Mammary epithelial cell (primary cell): ENCODE measurements at regions of chr12 and their contacts with region 1.

Region 1: DNA sequence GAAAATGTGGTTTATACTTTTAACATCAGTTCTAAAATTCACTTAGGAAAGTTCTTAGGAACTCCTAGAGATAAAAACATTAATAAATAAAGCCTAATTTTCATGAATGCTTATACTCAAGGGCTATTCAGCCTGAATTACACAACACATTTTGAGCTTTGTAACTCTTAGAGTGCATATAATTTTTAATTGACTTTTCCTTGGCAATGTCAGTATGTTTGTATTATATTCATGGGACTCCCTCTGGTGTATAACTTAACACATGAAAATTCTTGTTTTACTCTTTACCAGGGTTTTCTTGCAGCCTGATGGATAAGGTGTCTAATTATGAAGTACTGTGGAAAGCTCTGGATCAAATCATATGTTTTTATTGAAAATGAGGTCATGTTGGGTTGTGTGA is 150.6 kb upstream of the HMGA2 start:
- DNase-seq: no peak
- H3K4me3 ChIP-seq: no peak overlapping the region
- H3K27ac ChIP-seq: peak overlapping the region; percentile 98
- H3K4me1 ChIP-seq: peaks cover 55% of the 10 kb centered on the region
- H3K27me3 ChIP-seq: no peaks in the 10 kb centered on the region
- CTCF ChIP-seq: peak in 1 of 2 donors; percentile 46

Region 2: GRCh38 chr12:65313719-65314317 is 359.9 kb before region 1 on chr12:
- CTCF ChIA-PET with region 1: interaction called, 3 read pairs
- dilution Hi-C with region 1: no loop called
- in situ Hi-C with region 1: loop called (anchors 5 to 25 kb)
- intact Hi-C with region 1: loop called (anchors 1 kb)
- DNase-seq: peak; percentile 19
- H3K4me3 ChIP-seq: no peak overlapping the region
- H3K27ac ChIP-seq: peak overlapping the region; percentile 2
- H3K4me1 ChIP-seq: peaks cover 3% of the 10 kb centered on the region
- H3K27me3 ChIP-seq: no peaks in the 10 kb centered on the region
- CTCF ChIP-seq: peak; percentile 59 to 67

Region 3: DNA sequence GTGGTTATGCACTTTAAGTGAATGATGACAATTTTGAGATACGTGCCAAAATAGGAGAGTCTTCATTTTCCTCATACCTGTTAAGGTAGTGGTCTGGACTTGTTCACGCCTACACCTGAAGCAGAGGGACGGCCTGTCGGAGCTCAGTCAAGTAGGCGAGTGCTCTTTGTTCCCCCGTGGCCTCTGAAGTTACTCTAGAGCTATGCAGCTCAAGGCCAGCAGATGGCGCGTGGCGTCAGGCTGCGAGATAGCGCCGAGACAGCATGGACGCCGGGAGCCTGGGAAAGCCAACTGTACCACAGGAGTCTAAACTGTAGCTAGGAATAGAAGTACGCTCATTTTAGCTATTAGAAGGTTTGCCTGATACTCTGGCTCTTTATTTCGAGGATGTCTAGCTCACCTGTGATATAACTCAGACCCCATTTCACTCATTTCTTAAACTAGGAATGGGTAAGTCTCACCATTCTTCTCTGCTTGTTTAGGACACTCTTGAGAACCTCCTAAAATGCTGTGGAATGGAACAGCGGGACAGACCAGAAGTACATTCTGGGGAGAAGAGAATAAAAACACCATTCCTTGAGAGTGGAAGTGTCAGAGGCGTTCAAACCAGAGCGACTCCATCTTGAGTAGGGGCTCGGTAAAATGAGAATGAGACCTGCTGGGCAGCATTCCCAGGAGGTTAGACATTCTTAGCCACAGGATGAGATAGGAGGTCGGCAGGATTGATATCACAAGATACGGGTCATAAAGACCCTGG is 116.9 kb before region 1 on chr12:
- CTCF ChIA-PET with region 1: interaction called, 7 read pairs
- dilution Hi-C with region 1: loop called (anchors 5 kb)
- in situ Hi-C with region 1: no loop called
- intact Hi-C with region 1: loop called (anchors 1 kb)
- DNase-seq: peak; percentile 94
- H3K4me3 ChIP-seq: no peak overlapping the region
- H3K27ac ChIP-seq: peak overlapping the region; percentile 77
- H3K4me1 ChIP-seq: peaks cover 26% of the 10 kb centered on the region
- H3K27me3 ChIP-seq: no peaks in the 10 kb centered on the region
- CTCF ChIP-seq: peak; percentile 94 to 98

Region 4: GRCh38 chr12:65631621-65632111 is 42.1 kb before region 1 on chr12:
- CTCF ChIA-PET with region 1: no interaction called
- dilution Hi-C with region 1: no loop called
- in situ Hi-C with region 1: no loop called
- intact Hi-C with region 1: loop called (anchors 1 kb)
- DNase-seq: peak; percentile 100
- H3K4me3 ChIP-seq: no peak overlapping the region
- H3K27ac ChIP-seq: peak overlapping the region; percentile 100
- H3K4me1 ChIP-seq: peaks cover 54% of the 10 kb centered on the region
- H3K27me3 ChIP-seq: no peaks in the 10 kb centered on the region
- CTCF ChIP-seq: no peak

Region 5: DNA sequence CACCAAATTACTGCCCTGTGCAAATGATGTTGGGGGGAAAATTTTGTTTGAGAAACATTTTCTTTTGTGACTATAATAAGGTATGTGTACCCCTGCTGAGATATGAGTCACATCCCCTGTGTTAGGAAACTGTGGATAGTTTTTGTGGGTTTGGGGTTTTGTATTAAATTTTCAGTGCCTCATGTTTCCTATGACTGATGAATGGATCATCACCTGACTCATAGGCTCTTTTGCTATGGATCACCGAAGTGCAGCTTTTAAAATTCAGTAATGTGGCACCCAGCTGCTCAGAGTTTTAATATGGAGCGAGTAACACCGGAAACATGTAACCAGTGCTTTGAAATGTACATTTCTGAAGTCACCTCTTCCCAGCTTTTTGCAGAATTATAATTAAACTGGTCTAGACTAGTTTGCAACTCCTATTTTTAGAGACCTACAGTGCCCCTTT is 16.8 kb before region 1 on chr12:
- CTCF ChIA-PET with region 1: no interaction called
- dilution Hi-C with region 1: no loop called
- in situ Hi-C with region 1: no loop called
- intact Hi-C with region 1: loop called (anchors 1 kb)
- DNase-seq: peak; percentile 98
- H3K4me3 ChIP-seq: no peak overlapping the region
- H3K27ac ChIP-seq: peak overlapping the region; percentile 97
- H3K4me1 ChIP-seq: peaks cover 31% of the 10 kb centered on the region
- H3K27me3 ChIP-seq: no peaks in the 10 kb centered on the region
- CTCF ChIP-seq: no peak

Region 6: DNA sequence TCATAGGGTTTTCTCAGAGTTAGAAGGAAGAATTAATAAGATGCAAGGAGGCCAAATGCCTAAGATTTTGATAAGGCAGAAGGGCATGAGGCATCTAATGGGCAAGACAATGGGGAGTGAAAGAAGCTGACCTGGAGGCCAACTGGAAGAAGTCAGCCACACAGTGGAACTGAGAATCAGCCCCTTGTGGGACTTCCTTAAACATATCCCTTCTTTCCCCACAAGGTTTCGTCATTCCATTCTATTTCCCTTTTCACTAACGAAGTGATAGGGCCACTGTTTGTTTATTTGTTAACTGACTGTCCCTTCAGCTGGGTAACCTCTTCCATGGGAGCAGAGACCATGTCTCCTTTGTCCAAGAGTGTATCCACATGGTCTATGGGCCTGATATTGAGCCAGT is 714.8 kb after region 1 on chr12:
- CTCF ChIA-PET with region 1: no interaction called
- dilution Hi-C with region 1: no loop called
- in situ Hi-C with region 1: no loop called
- intact Hi-C with region 1: no loop called
- DNase-seq: no peak
- H3K4me3 ChIP-seq: no peak overlapping the region
- H3K27ac ChIP-seq: no peak overlapping the region
- H3K4me1 ChIP-seq: no peaks in the 10 kb centered on the region
- H3K27me3 ChIP-seq: no peaks in the 10 kb centered on the region
- CTCF ChIP-seq: no peak